Mammary epithelial cell (primary cell): ENCODE measurements at regions of chr17 and their contacts with region 1.

Region 1: DNA sequence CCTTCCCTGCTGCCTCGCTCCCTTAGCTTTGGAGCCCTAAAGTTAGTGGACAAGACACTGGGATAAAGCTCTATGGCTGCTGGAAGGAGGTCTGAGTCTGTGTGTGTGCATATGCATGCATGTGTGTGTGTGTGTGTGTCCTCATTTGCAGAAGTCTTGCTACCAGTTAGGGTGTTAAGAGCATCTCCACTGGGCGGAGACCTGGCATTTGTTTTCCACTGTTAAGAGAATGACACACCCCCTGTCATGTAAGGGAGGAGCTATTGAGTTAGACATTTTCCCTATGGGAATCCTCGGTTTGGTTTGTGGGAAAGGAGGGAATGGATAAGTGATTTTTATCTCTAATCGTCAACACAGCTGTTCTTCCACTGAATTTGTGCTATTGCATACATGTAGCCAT is 24.8 kb upstream of the ARHGAP23 start:
- DNase-seq: no peak
- H3K4me3 ChIP-seq: no peak overlapping the region
- H3K27ac ChIP-seq: no peak overlapping the region
- H3K4me1 ChIP-seq: no peaks in the 10 kb centered on the region
- H3K27me3 ChIP-seq: no peaks in the 10 kb centered on the region
- CTCF ChIP-seq: no peak

Region 2: DNA sequence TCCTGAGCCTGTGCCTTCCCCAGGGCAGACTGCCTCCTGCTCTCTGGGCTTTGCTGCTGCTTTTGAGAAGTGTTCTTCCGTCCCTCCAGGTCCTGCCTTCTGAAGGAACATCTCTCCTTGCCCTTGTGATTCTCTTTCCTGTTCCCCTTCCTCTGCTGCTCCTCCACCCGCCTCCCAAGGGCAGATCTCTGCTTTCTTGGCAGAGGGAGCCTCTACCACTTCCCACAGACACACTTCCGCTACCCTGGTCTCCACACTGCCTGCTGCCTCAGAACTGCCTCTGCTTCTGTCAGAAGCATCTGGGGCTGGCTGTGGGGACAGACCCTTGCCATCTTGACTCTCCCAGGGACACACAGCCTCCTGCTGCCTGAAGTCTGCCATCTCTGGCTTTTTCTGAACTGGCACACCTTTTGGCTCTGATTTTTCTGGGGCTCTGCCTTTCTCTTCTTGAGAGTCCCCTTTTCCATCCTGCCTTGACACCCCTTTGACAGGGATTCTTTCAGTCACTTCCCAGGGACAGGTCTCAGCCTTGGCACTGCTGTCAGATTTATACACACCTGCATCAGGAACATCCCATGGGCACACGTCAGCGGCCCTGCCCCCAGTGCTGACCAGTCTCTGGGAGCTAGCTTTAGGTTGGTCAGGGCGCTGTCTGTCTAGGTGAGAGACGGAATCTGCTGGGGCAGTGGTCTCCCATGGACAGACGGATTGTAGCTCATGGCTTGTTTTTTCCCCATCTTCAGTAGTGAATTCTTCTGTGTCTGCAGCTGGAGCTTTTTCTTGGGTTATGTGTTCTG is 76.3 kb before region 1 on chr17:
- CTCF ChIA-PET with region 1: no interaction called
- dilution Hi-C with region 1: no loop called
- in situ Hi-C with region 1: no loop called
- intact Hi-C with region 1: no loop called
- DNase-seq: no peak
- H3K4me3 ChIP-seq: no peak overlapping the region
- H3K27ac ChIP-seq: no peak overlapping the region
- H3K4me1 ChIP-seq: peaks cover 5% of the 10 kb centered on the region
- H3K27me3 ChIP-seq: no peaks in the 10 kb centered on the region
- CTCF ChIP-seq: no peak

Region 3: DNA sequence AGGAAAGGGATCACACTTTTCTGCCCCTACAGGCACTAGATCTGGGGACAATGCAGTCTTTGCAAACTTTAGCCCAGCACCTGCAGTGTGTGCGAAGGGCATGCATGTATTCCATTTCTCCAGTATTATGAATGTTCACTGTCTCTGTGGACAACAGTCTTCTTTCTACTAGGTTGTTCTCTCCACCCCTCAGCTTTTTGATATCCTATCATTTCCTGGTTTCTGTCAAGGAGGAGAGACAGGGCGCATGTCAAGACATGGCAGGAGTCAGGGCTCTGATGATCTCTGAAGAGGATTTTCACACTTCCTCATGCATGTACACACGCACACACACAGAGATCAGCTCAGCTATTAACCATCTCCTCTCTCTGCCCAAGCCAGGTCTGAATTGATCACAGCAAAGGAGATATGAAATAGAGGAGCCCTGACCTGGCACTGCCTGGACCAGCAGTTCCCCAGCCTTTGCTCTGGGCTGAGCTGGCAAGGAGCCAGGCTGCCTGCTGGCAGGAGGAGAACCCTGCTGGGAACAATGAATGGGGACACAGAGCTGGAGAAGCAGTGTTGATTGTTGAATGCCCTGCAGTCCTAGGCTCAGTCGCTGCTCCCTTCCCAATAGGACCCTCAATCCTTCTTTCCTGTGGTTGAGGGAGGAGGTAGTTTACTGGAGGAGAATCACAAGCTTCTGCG is 62.3 kb before region 1 on chr17:
- CTCF ChIA-PET with region 1: no interaction called
- dilution Hi-C with region 1: loop called (anchors 5 kb)
- in situ Hi-C with region 1: no loop called
- intact Hi-C with region 1: no loop called
- DNase-seq: no peak
- H3K4me3 ChIP-seq: no peak overlapping the region
- H3K27ac ChIP-seq: no peak overlapping the region
- H3K4me1 ChIP-seq: peaks cover 6% of the 10 kb centered on the region
- H3K27me3 ChIP-seq: no peaks in the 10 kb centered on the region
- CTCF ChIP-seq: no peak

Region 4: GRCh38 chr17:38369124-38369886 is 34.2 kb before region 1 on chr17:
- CTCF ChIA-PET with region 1: no interaction called
- dilution Hi-C with region 1: loop called (anchors 5 kb)
- in situ Hi-C with region 1: no loop called
- intact Hi-C with region 1: no loop called
- DNase-seq: no peak
- H3K4me3 ChIP-seq: no peak overlapping the region
- H3K27ac ChIP-seq: no peak overlapping the region
- H3K4me1 ChIP-seq: no peaks in the 10 kb centered on the region
- H3K27me3 ChIP-seq: no peaks in the 10 kb centered on the region
- CTCF ChIP-seq: no peak

Region 5: GRCh38 chr17:38617011-38617867 is 213.7 kb after region 1 on chr17:
- CTCF ChIA-PET with region 1: no interaction called
- dilution Hi-C with region 1: loop called (anchors 10 kb)
- in situ Hi-C with region 1: no loop called
- intact Hi-C with region 1: no loop called
- DNase-seq: no peak
- H3K4me3 ChIP-seq: no peak overlapping the region
- H3K27ac ChIP-seq: no peak overlapping the region
- H3K4me1 ChIP-seq: no peaks in the 10 kb centered on the region
- H3K27me3 ChIP-seq: peaks cover 4% of the 10 kb centered on the region
- CTCF ChIP-seq: no peak